Thyroid gland (tissue), 4 donors: ENCODE measurements at regions of chrX and their contacts with region 1.

Region 1: GRCh38 chrX:39814391-39814790 is 283.4 kb downstream of the BCOR start:
- DNase-seq: peak in 1 of 2 donors; percentile 14
- H3K4me3 ChIP-seq: no peak overlapping the region
- H3K27ac ChIP-seq: peak overlapping the region in 2 of 3 donors; percentile 48 to 68
- H3K4me1 ChIP-seq: peaks cover 0 to 16% of the 10 kb centered on the region in 2 donors
- H3K27me3 ChIP-seq: no peaks in the 10 kb centered on the region
- CTCF ChIP-seq: peak in 5 of 6 experiments; percentile 19 to 44 (median 37)
- POLR2A ChIP-seq: no peak

Region 2: GRCh38 chrX:40153335-40154249 is 339.2 kb after region 1 on chrX:
- intact Hi-C with region 1: loop called (anchors 10 kb)
- DNase-seq: peak; percentile 48 to 55
- H3K4me3 ChIP-seq: peak overlapping the region in 1 of 3 donors; percentile 35
- H3K27ac ChIP-seq: peak overlapping the region; percentile 47 to 77 (median 57)
- H3K4me1 ChIP-seq: peaks cover 30 to 33% of the 10 kb centered on the region in 2 donors
- H3K27me3 ChIP-seq: no peaks in the 10 kb centered on the region
- CTCF ChIP-seq: no peak
- POLR2A ChIP-seq: peak in 1 of 2 donors; percentile 16

Region 3: GRCh38 chrX:40266490-40267333 is 452.3 kb after region 1 on chrX:
- intact Hi-C with region 1: loop called (anchors 10 kb)
- DNase-seq: peak; percentile 61 to 68
- H3K4me3 ChIP-seq: peak overlapping the region in 1 of 3 donors; percentile 19
- H3K27ac ChIP-seq: peak overlapping the region in 2 of 3 donors; percentile 4 to 41
- H3K4me1 ChIP-seq: peaks cover 0 to 10% of the 10 kb centered on the region in 2 donors
- H3K27me3 ChIP-seq: no peaks in the 10 kb centered on the region
- CTCF ChIP-seq: peak; percentile 29 to 72 (median 57)
- POLR2A ChIP-seq: no peak

Region 4: DNA sequence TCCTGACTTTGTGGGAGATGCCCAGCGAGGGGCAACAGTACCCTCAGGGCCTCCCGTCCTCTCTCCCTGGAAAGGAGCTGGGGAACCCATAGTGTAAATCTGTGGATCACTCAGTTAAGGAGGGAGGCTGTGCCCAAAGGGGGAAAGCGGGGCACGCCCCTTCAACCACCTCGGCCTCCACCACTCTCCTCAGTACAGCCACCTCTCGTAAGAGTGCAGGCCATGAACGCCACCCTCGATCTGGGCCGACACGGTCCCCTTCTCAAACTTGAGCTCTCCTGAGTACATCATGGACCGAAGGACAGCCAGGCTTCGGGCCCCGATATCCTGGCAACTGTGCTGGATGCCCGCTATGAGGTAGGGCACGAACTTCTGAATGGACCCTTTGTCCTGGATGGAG is 544.6 kb after region 1 on chrX:
- intact Hi-C with region 1: no loop called
- DNase-seq: no peak
- H3K4me3 ChIP-seq: no peak overlapping the region
- H3K27ac ChIP-seq: no peak overlapping the region
- H3K4me1 ChIP-seq: no peaks in the 10 kb centered on the region
- H3K27me3 ChIP-seq: no peaks in the 10 kb centered on the region
- CTCF ChIP-seq: no peak
- POLR2A ChIP-seq: no peak